ENCODE measurements at regions of chr15 and their contacts with region 1.

Region 1: GRCh38 chr15:59751552-59752413 is 62.7 kb upstream of the BNIP2 start:
- DNase-seq: no peak
- H3K4me3 Mint-ChIP-seq: no peak overlapping the region
- H3K27ac Mint-ChIP-seq: no peak overlapping the region
- H3K4me1 Mint-ChIP-seq: peaks cover 8% of the 10 kb centered on the region
- H3K27me3 Mint-ChIP-seq: no peaks in the 10 kb centered on the region

Region 2: GRCh38 chr15:59741274-59741906 is 10.4 kb before region 1 on chr15:
- CTCF ChIA-PET with region 1: interaction called, 10 read pairs
- POLR2A ChIA-PET with region 1: no interaction called
- intact Hi-C with region 1: no loop called
- DNase-seq: no peak
- H3K4me3 Mint-ChIP-seq: no peak overlapping the region
- H3K27ac Mint-ChIP-seq: no peak overlapping the region
- H3K4me1 Mint-ChIP-seq: no peaks in the 10 kb centered on the region
- H3K27me3 Mint-ChIP-seq: peaks cover 4% of the 10 kb centered on the region

Region 3: DNA sequence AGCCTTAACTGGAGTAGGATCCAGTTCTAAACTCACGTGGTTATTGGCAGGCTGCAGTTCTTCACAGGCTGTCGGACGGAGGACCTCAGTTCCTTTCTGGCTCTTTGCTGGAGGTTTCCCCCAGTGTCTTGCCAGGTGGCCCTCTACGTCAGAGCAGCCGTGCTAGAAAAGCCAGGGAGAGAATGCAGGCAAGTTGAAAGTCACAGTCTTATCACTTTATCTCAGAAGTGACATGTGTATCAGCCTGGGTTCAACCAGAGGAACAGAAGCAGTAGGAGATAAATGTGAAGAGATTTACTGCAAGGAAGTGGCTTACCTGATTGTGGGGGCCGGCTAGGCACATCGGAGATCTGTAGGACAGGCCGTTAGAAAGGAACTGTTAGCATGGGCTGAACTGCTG is 62.6 kb after region 1 on chr15:
- CTCF ChIA-PET with region 1: no interaction called
- POLR2A ChIA-PET with region 1: no interaction called
- intact Hi-C with region 1: loop called (anchors 10 kb)
- DNase-seq: peak; percentile 31
- H3K4me3 Mint-ChIP-seq: no peak overlapping the region
- H3K27ac Mint-ChIP-seq: no peak overlapping the region
- H3K4me1 Mint-ChIP-seq: peaks cover 23% of the 10 kb centered on the region
- H3K27me3 Mint-ChIP-seq: peaks cover 1% of the 10 kb centered on the region

Region 4: GRCh38 chr15:59997070-59997701 is 245.4 kb after region 1 on chr15:
- CTCF ChIA-PET with region 1: no interaction called
- POLR2A ChIA-PET with region 1: no interaction called
- intact Hi-C with region 1: loop called (anchors 10 kb)
- DNase-seq: peak; percentile 80
- H3K4me3 Mint-ChIP-seq: peak overlapping the region; percentile 68
- H3K27ac Mint-ChIP-seq: peak overlapping the region; percentile 14
- H3K4me1 Mint-ChIP-seq: peaks cover 51% of the 10 kb centered on the region
- H3K27me3 Mint-ChIP-seq: peaks cover 96% of the 10 kb centered on the region

Measured in activated CD4-positive, alpha-beta memory T cell treated with anti-CD3 and anti-CD28 coated beads for 36 hours (primary cell).